ENCODE measurements at regions of chr14 and their contacts with region 1.

Region 1: DNA sequence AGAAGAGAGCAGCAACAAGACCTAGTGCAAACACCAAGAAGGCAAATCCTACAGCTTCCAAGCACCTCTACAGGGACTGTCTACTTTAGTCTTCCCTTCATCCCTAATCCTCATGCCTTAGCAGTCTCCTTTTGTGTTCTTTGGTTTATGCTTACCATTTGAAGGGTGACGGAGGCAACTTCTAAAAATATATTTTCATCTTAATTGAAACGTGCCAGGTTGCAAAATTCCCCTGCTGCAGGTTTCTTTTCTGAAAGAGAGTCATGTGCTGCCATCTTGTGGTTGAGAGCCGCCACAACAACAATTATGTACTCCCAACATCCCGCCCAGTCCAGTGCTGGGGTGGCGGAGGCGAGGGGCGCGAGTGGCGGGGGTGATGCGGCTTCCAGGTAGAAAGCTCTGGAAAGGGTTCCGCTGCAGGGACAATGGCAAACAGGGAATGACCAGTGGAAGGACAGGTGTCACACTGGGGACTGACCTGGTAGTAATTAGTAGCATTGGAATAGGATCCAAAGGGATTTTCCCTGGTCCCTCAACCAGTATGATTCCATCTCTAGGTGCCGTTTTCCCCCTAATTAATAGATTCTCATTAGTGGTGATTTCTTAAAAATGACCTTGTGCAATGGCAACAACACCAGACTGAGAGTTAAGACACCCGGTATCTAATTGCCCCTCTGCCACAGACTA is 80.3 kb upstream of the GNG2 start:
- DNase-seq: peak; percentile 45 to 67 (median 65)
- H3K4me3 ChIP-seq: no peak overlapping the region
- H3K4me3 Mint-ChIP-seq: no peak overlapping the region
- H3K27ac ChIP-seq: no peak overlapping the region
- H3K27ac Mint-ChIP-seq: peak overlapping the region in 2 of 7 donors; percentile 7 to 41
- H3K4me1 ChIP-seq: peaks cover 10 to 21% of the 10 kb centered on the region in 2 donors
- H3K4me1 Mint-ChIP-seq: peaks cover 24% of the 10 kb centered on the region
- H3K27me3 ChIP-seq: peaks cover 4 to 5% of the 10 kb centered on the region in 2 donors
- H3K27me3 Mint-ChIP-seq: peaks cover 2 to 16% (median 14%) of the 10 kb centered on the region in 3 donors
- CTCF ChIP-seq: peak; percentile 85

Region 2: DNA sequence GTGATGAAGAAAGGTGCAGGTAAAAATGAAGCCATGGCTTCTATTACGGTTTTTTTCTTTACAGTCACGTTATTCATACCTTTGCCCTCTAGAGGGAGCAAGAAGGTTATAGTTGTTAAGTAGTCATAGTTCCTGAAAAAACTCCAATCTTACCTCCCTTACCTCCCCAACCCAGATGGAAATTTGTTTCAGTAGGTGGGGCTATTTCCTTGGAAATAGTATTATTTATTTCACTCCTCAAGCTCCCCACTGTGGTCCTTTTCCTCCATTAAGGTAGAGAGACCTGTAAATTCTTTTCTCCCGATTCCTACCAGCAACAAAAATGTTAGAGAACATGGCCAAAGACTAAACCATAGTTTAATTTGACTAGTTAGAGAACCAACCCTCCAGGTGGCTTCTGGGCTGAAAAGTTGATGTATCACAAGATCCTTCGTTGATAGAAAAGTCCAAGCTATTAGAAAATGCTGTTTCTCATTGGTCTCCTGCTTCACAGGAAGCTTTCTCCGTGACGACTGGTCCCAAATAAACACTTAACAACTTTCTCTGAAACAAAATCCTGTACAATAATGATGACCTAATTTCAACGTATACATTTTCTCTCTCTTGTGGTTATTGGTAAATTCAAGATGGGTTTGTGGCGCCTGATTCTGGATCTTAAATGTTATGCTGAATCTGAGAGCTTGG is 496.6 kb before region 1 on chr14:
- intact Hi-C with region 1: loop called in 1 of 2 experiments (anchors 10 kb)
- DNase-seq: peak; percentile 20 to 52 (median 46)
- H3K4me3 ChIP-seq: no peak overlapping the region
- H3K4me3 Mint-ChIP-seq: no peak overlapping the region
- H3K27ac ChIP-seq: no peak overlapping the region
- H3K27ac Mint-ChIP-seq: no peak overlapping the region
- H3K4me1 ChIP-seq: no peaks in the 10 kb centered on the region
- H3K4me1 Mint-ChIP-seq: no peaks in the 10 kb centered on the region
- H3K27me3 ChIP-seq: no peaks in the 10 kb centered on the region
- H3K27me3 Mint-ChIP-seq: peaks cover 0 to 2% (median 2%) of the 10 kb centered on the region in 3 donors
- CTCF ChIP-seq: peak; percentile 78

Region 3: DNA sequence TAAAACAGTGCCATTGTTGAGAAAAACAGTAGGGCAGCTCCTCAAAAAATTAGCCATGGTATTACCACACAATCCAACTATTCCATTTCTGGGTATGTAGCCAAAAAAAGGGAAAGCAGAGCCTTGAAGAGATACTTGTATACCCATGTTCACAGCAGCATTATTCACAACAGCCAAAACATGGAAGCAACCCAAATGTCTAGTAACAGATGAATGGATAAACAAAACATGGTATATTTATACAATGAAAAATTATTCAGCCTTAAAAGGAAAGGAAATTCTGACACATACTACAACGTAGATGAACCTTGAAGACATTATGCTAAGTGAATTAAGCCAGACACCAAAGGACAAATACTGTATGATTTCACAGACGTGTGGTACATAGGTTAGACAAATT is 12.7 kb after region 1 on chr14:
- intact Hi-C with region 1: no loop called
- DNase-seq: no peak
- H3K4me3 ChIP-seq: no peak overlapping the region
- H3K4me3 Mint-ChIP-seq: no peak overlapping the region
- H3K27ac ChIP-seq: no peak overlapping the region
- H3K27ac Mint-ChIP-seq: no peak overlapping the region
- H3K4me1 ChIP-seq: peaks cover 17 to 26% of the 10 kb centered on the region in 2 donors
- H3K4me1 Mint-ChIP-seq: peaks cover 18% of the 10 kb centered on the region
- H3K27me3 ChIP-seq: no peaks in the 10 kb centered on the region
- H3K27me3 Mint-ChIP-seq: peaks cover 0 to 14% (median 1%) of the 10 kb centered on the region in 3 donors
- CTCF ChIP-seq: no peak

Region 4: GRCh38 chr14:51860164-51860824 is 80.1 kb after region 1 on chr14 and contains the start of gene GNG2:
- intact Hi-C with region 1: loop called in 1 of 2 experiments (anchors 5 kb)
- DNase-seq: peak; percentile 78 to 87 (median 86)
- H3K4me3 ChIP-seq: peak within 1 kb of the TSS; percentile 79 to 95 (median 82)
- H3K4me3 Mint-ChIP-seq: peak within 1 kb of the TSS; percentile 96 to 97
- H3K27ac ChIP-seq: peak within 1 kb of the TSS; percentile 88 to 92
- H3K27ac Mint-ChIP-seq: peak within 1 kb of the TSS; percentile 93 to 97 (median 95)
- H3K4me1 ChIP-seq: peaks cover 56 to 78% of the 10 kb centered on the region in 2 donors
- H3K4me1 Mint-ChIP-seq: peaks cover 82% of the 10 kb centered on the region
- H3K27me3 ChIP-seq: no peaks in the 10 kb centered on the region
- H3K27me3 Mint-ChIP-seq: peaks cover 0 to 2% (median 0%) of the 10 kb centered on the region in 3 donors
- CTCF ChIP-seq: no peak
- polyA plus RNA-seq, gene GNG2: 42.7 to 151 (median 146) TPM

Region 5: GRCh38 chr14:51901475-51902024 is 121.4 kb after region 1 on chr14:
- intact Hi-C with region 1: loop called in 1 of 2 experiments (anchors 10 kb)
- DNase-seq: no peak
- H3K4me3 ChIP-seq: no peak overlapping the region
- H3K4me3 Mint-ChIP-seq: no peak overlapping the region
- H3K27ac ChIP-seq: no peak overlapping the region
- H3K27ac Mint-ChIP-seq: peak overlapping the region in 3 of 7 donors; percentile 5 to 22 (median 21)
- H3K4me1 ChIP-seq: peaks cover 6 to 7% of the 10 kb centered on the region in 2 donors
- H3K4me1 Mint-ChIP-seq: peaks cover 21% of the 10 kb centered on the region
- H3K27me3 ChIP-seq: no peaks in the 10 kb centered on the region
- H3K27me3 Mint-ChIP-seq: peaks cover 0 to 4% (median 0%) of the 10 kb centered on the region in 3 donors
- CTCF ChIP-seq: no peak

Region 6: DNA sequence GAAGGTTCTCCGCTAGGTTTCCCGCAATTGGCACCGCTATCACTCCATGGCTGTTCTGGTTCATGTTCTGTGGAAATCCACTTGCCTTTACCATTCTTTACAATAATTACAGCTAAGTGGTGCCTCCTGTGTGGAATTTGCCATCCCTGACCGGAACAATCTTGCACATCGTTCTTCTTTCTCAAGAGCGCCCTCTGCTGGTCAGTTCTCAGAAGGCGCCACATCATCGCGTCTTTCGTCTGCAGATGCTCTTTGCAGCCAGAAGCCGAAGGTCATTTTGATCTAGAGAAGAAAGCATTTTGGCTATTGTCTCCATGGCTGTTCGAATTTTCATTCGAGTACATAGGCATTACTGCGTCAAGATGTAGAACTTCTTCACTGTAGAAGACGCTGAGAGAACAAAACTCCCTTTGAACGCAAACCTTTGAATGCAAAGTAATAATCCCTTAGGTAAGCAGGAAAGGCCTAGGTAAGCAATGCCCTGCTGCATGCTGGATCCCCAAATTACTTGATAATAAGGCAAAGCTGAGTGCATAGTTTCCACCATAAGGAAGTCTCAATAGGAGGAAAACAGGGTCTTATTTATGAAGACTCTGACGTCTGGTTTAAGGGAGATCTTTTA is 199.1 kb after region 1 on chr14:
- intact Hi-C with region 1: loop called in 1 of 2 experiments (anchors 10 kb)
- DNase-seq: peak; percentile 70 to 79 (median 73)
- H3K4me3 ChIP-seq: no peak overlapping the region
- H3K4me3 Mint-ChIP-seq: no peak overlapping the region
- H3K27ac ChIP-seq: no peak overlapping the region
- H3K27ac Mint-ChIP-seq: no peak overlapping the region
- H3K4me1 ChIP-seq: no peaks in the 10 kb centered on the region
- H3K4me1 Mint-ChIP-seq: peaks cover 4% of the 10 kb centered on the region
- H3K27me3 ChIP-seq: peaks cover 0 to 2% of the 10 kb centered on the region in 2 donors
- H3K27me3 Mint-ChIP-seq: peaks cover 2 to 7% (median 2%) of the 10 kb centered on the region in 3 donors
- CTCF ChIP-seq: peak; percentile 93

Measured in CD14-positive monocyte (primary cell).